Body of pancreas (tissue), 4 donors: ENCODE measurements at regions of chr7 and their contacts with region 1.

Region 1: GRCh38 chr7:74206589-74207120 is 3.2 kb upstream of the LAT2 start:
- DNase-seq: peak; percentile 87 to 91 (median 90)
- ATAC-seq: peak; percentile 90
- H3K4me3 ChIP-seq: no peak overlapping the region
- H3K27ac ChIP-seq: no peak overlapping the region
- H3K4me1 ChIP-seq: peaks cover 8% of the 10 kb centered on the region
- H3K27me3 ChIP-seq: no peaks in the 10 kb centered on the region
- CTCF ChIP-seq: peak; percentile 84 to 97 (median 95)
- POLR2A ChIP-seq: no peak

Region 2: GRCh38 chr7:73828107-73828803 is 378.4 kb before region 1 on chr7:
- intact Hi-C with region 1: no loop called
- DNase-seq: peak in 1 of 4 donors; percentile 91
- ATAC-seq: peak; percentile 50
- H3K4me3 ChIP-seq: no peak overlapping the region
- H3K27ac ChIP-seq: peak overlapping the region; percentile 96 to 100 (median 98)
- H3K4me1 ChIP-seq: peaks cover 69% of the 10 kb centered on the region
- H3K27me3 ChIP-seq: no peaks in the 10 kb centered on the region
- CTCF ChIP-seq: no peak
- POLR2A ChIP-seq: peak in 2 of 3 donors; percentile 72 to 77

Region 3: GRCh38 chr7:73865738-73866445 is 340.8 kb before region 1 on chr7:
- intact Hi-C with region 1: loop called (anchors 5 kb)
- DNase-seq: peak; percentile 47 to 68 (median 53)
- ATAC-seq: peak; percentile 72
- H3K4me3 ChIP-seq: no peak overlapping the region
- H3K27ac ChIP-seq: no peak overlapping the region
- H3K4me1 ChIP-seq: peaks cover 8% of the 10 kb centered on the region
- H3K27me3 ChIP-seq: no peaks in the 10 kb centered on the region
- CTCF ChIP-seq: peak in 6 of 7 experiments; percentile 46 to 72 (median 60)
- POLR2A ChIP-seq: no peak

Region 4: DNA sequence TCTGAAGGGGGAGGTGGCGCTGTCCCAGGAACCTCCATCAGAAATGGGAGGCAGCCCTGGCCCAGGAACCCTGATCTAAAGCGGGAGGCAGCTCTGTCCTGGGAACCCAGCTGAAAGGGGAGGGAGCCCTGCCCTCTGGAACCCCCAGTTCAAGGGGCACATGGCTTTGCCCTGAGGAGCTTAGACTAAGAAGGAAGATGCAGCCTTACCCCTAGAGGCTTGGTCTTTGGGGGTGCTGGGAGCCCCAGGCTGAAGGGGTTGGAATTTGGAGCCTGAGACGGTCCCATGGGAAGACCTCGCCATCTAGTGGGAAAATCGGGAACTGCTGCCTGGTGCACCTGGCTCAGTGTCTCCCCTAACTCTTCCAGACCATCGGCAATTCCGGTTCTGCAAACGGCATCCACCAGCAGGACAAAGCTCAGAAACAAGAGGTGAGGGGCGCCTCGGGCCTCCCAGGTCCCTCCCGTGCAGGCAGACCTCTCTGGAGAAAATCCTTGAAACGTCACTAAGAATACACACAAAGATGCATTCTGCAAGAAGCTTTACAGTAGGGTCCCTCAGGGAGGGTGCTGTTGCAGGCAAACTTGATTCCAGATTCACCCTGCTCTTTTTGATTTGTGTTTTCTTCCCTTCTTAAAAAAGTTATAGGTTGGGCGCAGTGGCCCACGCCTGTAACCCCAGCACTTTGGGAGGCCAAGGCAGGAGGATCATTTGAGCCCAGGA is 194.6 kb after region 1 on chr7:
- intact Hi-C with region 1: loop called (anchors 2 kb)
- DNase-seq: peak; percentile 72 to 84 (median 77)
- ATAC-seq: peak; percentile 67
- H3K4me3 ChIP-seq: no peak overlapping the region
- H3K27ac ChIP-seq: no peak overlapping the region
- H3K4me1 ChIP-seq: no peaks in the 10 kb centered on the region
- H3K27me3 ChIP-seq: no peaks in the 10 kb centered on the region
- CTCF ChIP-seq: peak; percentile 87 to 99 (median 90)
- POLR2A ChIP-seq: no peak